Colonic mucosa (tissue), 4 donors: ENCODE measurements at regions of chr13 and their contacts with region 1.

Region 1: GRCh38 chr13:36910545-36910944 is 9.5 kb downstream of the SMAD9 start:
- DNase-seq: no peak
- H3K4me3 ChIP-seq: no peak overlapping the region
- H3K27ac ChIP-seq: no peak overlapping the region
- H3K4me1 ChIP-seq: no peaks in the 10 kb centered on the region
- H3K27me3 ChIP-seq: no peaks in the 10 kb centered on the region
- CTCF ChIP-seq: no peak

Region 2: DNA sequence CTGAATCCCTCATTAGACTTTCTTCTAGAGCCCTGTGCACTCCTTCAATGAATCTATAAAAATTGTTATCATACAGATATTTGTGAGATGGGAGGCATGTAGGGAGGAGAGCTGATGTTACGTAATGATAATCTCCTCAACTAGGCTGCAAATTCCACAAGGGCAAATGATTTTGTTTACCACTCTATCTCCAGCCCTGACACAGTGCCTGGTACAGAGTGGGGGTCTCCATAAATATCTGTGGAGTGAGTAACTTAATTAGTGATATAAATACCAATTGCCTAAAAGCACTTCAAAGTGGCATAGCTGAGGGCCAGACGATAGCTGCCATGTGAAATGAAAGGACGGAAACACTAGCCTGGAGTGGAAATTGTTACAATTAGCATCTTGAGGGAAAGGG is 182.5 kb before region 1 on chr13:
- intact Hi-C with region 1: no loop called
- DNase-seq: no peak
- H3K4me3 ChIP-seq: no peak overlapping the region
- H3K27ac ChIP-seq: no peak overlapping the region
- H3K4me1 ChIP-seq: no peaks in the 10 kb centered on the region
- H3K27me3 ChIP-seq: no peaks in the 10 kb centered on the region
- CTCF ChIP-seq: no peak

Region 3: GRCh38 chr13:36887758-36888521 is 22.6 kb before region 1 on chr13:
- intact Hi-C with region 1: loop called (anchors 2 kb)
- DNase-seq: no peak
- H3K4me3 ChIP-seq: no peak overlapping the region
- H3K27ac ChIP-seq: no peak overlapping the region
- H3K4me1 ChIP-seq: no peaks in the 10 kb centered on the region
- H3K27me3 ChIP-seq: no peaks in the 10 kb centered on the region
- CTCF ChIP-seq: no peak

Region 4: DNA sequence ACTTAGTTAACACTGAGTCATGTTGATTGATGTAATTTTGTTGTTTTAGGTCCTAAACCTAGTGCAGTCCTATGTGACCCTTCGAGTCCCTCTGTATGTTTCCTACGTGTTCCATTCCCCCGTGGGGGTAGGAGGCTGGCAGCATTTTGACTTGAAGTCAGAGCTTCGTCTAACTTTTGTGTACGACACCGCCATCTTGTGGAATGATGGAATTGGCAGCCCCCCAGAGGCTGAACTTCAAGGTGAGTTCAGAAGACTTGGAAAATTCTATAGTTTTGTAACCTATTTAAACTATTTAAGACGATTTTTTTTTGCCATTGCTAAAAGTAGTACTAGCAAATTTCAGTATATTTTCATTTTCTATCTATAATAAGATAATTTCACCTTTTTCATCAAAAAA is 1962.1 kb after region 1 on chr13:
- intact Hi-C with region 1: no loop called
- DNase-seq: no peak
- H3K4me3 ChIP-seq: no peak overlapping the region
- H3K27ac ChIP-seq: no peak overlapping the region
- H3K4me1 ChIP-seq: no peaks in the 10 kb centered on the region
- H3K27me3 ChIP-seq: no peaks in the 10 kb centered on the region
- CTCF ChIP-seq: no peak